ENCODE measurements at regions of chr6 and their contacts with region 1.

Region 1: DNA sequence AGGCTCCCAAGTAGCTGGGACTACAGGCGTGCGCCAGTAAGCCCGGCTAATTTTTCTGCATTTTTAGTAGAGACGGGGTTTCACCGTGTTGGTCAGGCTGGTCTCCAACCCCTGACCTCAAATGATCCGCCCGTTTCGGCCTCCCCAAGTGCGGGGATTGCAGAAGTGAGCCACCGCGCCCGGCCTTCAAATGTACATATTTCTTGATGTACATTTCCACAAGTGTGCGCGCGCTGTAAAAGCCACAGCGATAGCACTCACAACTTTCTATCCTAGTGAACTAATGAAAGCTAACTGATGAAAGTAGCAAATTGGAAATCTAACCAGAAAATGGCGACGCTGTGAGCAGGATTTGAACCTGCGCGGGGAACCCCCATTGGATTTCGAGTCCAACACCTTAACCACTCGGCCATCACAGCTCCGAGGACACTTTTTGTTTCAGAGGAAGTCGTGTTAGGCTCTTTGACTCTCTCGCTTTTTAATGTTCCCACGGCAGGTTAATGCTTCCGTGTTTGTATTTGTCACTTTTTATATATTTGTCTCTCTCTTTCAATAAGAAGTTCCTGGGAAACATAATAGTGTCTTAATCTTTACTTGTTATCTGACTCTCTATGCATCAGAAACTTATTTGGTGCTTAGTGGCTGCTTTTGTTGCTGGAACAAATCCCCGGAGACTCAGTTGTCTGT is 199.4 kb upstream of the ZNF184 start:
- H3K4me3 ChIP-seq: peak overlapping the region; percentile 43
- H3K27ac ChIP-seq: peak overlapping the region; percentile 54
- H3K4me1 ChIP-seq: no peaks in the 10 kb centered on the region
- CTCF ChIP-seq: no peak

Region 2: DNA sequence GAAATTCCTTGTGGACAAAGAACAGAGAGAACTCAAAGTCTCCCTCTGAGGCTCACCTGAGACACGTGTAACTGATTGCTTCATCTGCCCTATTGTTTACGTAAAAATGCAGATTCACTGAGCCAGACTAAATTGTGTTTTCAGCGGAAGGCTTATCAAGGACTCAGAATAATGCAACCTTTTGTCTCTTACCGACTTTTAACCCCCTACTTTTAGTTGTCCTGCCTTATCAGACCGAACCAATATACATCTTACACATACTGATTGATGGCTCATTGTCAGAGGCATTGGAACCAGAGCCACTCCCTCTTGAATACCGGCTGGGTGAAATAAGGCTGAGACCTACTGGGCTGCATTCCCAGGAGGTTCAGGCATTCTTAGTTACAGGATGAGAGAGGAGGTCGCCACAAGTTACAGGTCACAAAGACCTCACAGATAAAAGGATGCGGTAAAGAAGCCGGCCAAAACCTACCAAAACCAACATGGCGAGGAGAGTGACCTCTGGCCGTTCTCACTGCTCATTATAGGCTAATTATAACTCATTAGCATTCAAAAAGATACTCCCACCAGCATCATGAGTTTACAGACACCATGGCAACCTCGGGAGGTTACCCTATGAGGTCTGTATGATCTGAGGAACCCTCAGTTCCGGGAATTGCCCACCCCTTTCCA is 103.9 kb before region 1 on chr6:
- CTCF ChIA-PET with region 1: no interaction called
- POLR2A ChIA-PET with region 1: no interaction called
- H3K4me3 ChIP-seq: no peak overlapping the region
- H3K27ac ChIP-seq: no peak overlapping the region
- H3K4me1 ChIP-seq: no peaks in the 10 kb centered on the region
- CTCF ChIP-seq: no peak

Region 3: DNA sequence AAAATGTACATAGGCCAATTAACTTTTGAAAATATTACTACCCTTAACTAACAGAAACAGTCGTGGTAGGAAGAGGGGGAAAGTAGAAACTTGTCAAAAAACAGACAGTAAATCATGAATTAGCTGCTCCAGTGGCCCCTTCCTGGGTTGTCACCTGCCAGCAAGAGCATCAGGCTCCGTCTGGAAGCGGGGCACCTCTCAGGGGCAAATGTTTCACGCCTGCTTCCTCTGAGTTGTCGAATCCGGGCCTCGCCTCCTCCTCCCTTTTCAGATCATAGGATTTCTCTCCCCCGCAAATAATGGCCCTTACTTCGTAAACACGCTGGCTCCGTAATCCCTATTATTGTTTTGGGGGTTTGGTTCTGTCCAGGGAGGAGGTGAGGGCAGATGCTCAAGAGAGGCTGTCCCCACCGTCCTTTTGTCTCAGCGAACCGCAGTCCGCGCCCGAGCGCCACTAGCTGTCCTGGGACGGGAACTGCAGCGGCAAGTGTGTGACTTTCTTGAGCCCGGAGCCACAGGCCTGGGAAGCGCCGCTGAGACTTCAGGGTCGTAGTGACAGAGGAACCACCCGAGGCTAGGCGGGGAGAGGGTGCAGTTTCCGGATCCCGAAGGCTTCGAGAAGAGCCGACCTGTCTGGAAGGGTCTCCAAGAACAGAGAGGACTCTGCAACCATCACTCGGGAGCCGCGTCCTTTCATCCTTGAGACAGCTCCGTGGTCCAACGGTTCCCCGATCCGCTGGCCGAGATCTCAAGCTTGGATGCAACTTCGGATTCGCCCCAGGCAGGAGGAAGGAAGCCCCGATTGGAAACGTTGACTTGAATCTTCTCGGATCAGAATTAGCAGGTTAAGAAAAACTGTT is 15.1 kb after region 1 on chr6:
- CTCF ChIA-PET with region 1: interaction called, 11 read pairs
- POLR2A ChIA-PET with region 1: interaction called, 11 read pairs
- H3K4me3 ChIP-seq: peak overlapping the region; percentile 68
- H3K27ac ChIP-seq: peak overlapping the region; percentile 63
- H3K4me1 ChIP-seq: no peaks in the 10 kb centered on the region
- CTCF ChIP-seq: peak; percentile 80

Region 4: DNA sequence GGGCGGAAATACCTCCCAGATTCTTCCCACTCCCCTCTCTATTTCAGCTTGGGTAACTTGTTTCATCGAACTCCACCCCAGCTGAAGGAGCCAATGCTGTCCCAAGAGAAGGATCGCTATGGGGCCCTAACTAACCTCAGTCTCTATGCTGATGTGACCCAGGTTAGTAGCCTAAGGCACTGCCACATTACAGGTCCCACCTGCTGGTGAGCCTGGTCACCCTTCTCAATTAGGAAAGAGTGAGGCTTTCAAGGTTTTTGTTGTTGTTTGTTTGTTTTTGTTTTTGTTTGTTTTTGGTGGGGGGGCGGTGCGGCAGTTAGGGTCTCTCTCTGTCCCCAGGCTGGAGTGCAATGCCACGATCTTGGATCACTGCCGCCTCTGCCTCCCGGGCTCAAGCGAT is 71.6 kb after region 1 on chr6:
- CTCF ChIA-PET with region 1: no interaction called
- POLR2A ChIA-PET with region 1: no interaction called
- H3K4me3 ChIP-seq: no peak overlapping the region
- H3K27ac ChIP-seq: no peak overlapping the region
- H3K4me1 ChIP-seq: no peaks in the 10 kb centered on the region
- CTCF ChIP-seq: no peak